ENCODE measurements at regions of chr1 and their contacts with region 1.

Region 1: DNA sequence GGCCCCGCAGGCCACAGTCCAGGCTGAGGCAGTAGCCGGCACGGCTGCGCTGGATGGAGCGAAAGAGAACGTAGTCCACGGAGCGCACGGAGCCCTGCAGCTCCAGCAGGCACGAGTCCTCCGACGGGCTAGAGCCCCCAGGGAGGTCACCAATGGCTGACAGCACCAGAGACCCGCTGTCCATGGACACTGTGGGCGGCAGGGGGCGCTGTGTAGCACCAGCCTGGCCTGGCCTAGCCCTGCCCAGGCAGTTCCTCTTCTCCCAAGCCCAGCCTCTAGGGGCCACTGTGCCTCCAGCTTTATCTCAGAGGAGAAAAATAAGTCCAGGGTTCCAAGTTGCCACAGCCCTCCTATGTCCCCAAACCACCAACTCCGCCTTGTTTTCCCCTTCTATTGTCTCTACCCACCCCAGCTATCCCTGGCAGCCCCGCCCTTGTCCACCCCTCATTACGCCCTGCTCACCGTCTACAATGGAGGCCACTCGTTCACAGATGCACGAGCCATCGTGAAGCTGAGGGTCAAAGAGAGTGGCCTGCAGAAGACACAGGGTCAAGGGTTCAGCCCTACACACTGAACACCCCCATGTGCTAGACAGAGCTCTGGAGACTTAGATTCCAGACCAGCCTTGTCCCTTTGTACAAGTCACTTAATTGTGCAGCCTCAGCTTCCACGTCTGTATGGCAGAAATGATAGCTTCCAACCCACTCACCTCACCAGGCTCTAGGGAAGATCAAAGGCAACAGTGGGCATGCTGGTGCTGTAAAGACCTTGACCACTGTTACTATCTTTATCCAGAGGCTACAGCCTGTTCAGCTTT is 4.4 kb downstream of the ENTREP3 start:
- DNase-seq: peak; percentile 94 to 95 (median 94)
- ATAC-seq: peak; percentile 88
- H3K4me3 ChIP-seq: no peak overlapping the region
- H3K27ac ChIP-seq: peak overlapping the region in 2 of 4 donors; percentile 30 to 43
- H3K4me1 ChIP-seq: peaks cover 29% of the 10 kb centered on the region
- H3K27me3 ChIP-seq: no peaks in the 10 kb centered on the region
- CTCF ChIP-seq: peak; percentile 99 to 100 (median 100)
- POLR2A ChIP-seq: no peak

Region 2: GRCh38 chr1:155323798-155324610 is 73.2 kb after region 1 on chr1:
- intact Hi-C with region 1: loop called (anchors 5 kb)
- DNase-seq: peak; percentile 94 to 97 (median 95)
- ATAC-seq: peak; percentile 87
- H3K4me3 ChIP-seq: peak overlapping the region; percentile 73 to 76
- H3K27ac ChIP-seq: peak overlapping the region; percentile 93 to 97 (median 95)
- H3K4me1 ChIP-seq: peaks cover 36% of the 10 kb centered on the region
- H3K27me3 ChIP-seq: no peaks in the 10 kb centered on the region
- CTCF ChIP-seq: peak in 2 of 7 experiments; percentile 10 to 19
- POLR2A ChIP-seq: peak; percentile 68 to 88 (median 88)

Region 3: DNA sequence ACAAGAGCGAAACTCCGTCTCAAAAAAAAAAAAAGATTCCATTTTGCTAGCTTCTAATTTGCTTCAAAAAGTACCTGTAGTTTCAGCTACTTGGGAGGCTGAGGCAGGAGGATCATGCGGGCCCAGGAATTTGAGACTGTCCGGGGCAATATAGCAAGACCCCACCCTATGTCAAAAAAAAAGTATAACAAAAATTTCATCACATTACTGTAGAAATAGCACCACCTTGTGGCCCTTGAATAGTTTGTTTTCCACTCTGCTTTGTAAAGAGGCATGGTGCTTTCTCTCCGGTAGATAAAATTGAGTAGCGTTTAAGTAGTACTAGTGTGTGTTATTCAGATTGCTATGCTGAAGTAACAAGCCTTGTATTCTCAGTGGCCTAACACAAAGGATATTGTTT is 340.9 kb after region 1 on chr1:
- intact Hi-C with region 1: loop called (anchors 10 kb)
- DNase-seq: peak in 3 of 4 donors; percentile 27 to 61 (median 30)
- ATAC-seq: peak; percentile 71
- H3K4me3 ChIP-seq: no peak overlapping the region
- H3K27ac ChIP-seq: no peak overlapping the region
- H3K4me1 ChIP-seq: no peaks in the 10 kb centered on the region
- H3K27me3 ChIP-seq: no peaks in the 10 kb centered on the region
- CTCF ChIP-seq: peak; percentile 9 to 66 (median 54)
- POLR2A ChIP-seq: no peak

Measured in body of pancreas (tissue), 4 donors.